ENCODE measurements at regions of chr9 and their contacts with region 1.

Region 1: DNA sequence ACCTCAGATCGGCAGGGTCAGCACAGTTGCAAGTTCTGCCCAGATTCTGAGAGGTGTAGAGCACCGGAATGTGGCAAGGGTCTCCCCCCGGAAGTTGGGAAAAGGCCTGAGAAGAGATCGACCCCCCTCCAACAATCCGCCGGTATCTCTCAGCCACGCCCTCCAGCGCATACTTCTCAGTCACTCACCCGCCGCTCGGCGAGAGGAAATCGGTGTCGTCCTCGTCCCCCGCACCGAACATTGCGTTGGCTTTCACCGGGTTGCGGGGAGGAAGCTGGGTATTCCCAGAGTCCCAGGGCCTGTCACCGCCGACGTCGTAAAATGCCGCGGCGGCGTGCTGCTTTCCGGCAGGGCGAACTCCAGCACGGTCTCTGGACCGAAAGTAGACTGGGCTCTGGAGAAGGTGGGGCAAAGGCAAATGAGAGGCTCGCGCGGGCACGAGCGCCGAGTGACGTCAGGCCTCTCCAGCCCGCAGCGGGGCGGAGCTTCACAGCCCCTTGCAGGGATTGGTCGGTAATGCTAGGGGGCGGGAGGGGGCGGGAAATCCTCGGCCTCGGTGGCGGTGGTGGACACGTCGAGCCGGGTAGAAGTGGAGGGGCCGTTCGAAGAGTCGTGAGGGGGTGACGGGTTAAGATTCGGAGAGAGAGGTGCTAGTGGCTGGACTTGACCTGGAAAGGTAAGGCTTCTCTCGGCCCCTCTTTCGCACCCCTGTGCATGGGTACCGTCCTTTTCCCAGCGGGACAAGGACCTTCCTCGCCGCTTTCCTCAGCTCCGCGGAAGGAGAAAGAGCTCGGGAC is at the starts of genes FKBP15 and SLC31A1:
- DNase-seq: peak; percentile 98
- ATAC-seq: peak; percentile 98
- H3K4me3 Mint-ChIP-seq: peak within 1 kb of the TSS; percentile 86
- H3K27ac Mint-ChIP-seq: peak within 1 kb of the TSS; percentile 89
- H3K4me1 Mint-ChIP-seq: peaks cover 45% of the 10 kb centered on the region
- H3K27me3 Mint-ChIP-seq: no peaks in the 10 kb centered on the region
- CTCF ChIP-seq: no peak
- total RNA-seq, gene FKBP15: 32.5 to 33.7 TPM
- total RNA-seq, gene SLC31A1: 18.3 to 19.2 TPM

Region 2: GRCh38 chr9:113125386-113126035 is 95.7 kb before region 1 on chr9:
- CTCF ChIA-PET with region 1: no interaction called
- POLR2A ChIA-PET with region 1: no interaction called
- intact Hi-C with region 1: no loop called
- DNase-seq: no peak
- ATAC-seq: no peak
- H3K4me3 Mint-ChIP-seq: no peak overlapping the region
- H3K27ac Mint-ChIP-seq: no peak overlapping the region
- H3K4me1 Mint-ChIP-seq: no peaks in the 10 kb centered on the region
- H3K27me3 Mint-ChIP-seq: peaks cover 22% of the 10 kb centered on the region
- CTCF ChIP-seq: no peak

Region 3: GRCh38 chr9:113150670-113151611 is 70.3 kb before region 1 on chr9 and contains the start of gene SLC31A2:
- CTCF ChIA-PET with region 1: interaction called, 4 read pairs
- POLR2A ChIA-PET with region 1: interaction called, 10 read pairs
- intact Hi-C with region 1: no loop called
- DNase-seq: peak; percentile 93
- ATAC-seq: peak; percentile 95
- H3K4me3 Mint-ChIP-seq: peak within 1 kb of the TSS; percentile 78
- H3K27ac Mint-ChIP-seq: peak within 1 kb of the TSS; percentile 61
- H3K4me1 Mint-ChIP-seq: peaks cover 27% of the 10 kb centered on the region
- H3K27me3 Mint-ChIP-seq: no peaks in the 10 kb centered on the region
- CTCF ChIP-seq: peak; percentile 36
- total RNA-seq, gene SLC31A2: 1.6 to 3.4 TPM